Dorsolateral prefrontal cortex (tissue), 120 donors: ENCODE measurements at regions of chrX and their contacts with region 1.

Region 1: DNA sequence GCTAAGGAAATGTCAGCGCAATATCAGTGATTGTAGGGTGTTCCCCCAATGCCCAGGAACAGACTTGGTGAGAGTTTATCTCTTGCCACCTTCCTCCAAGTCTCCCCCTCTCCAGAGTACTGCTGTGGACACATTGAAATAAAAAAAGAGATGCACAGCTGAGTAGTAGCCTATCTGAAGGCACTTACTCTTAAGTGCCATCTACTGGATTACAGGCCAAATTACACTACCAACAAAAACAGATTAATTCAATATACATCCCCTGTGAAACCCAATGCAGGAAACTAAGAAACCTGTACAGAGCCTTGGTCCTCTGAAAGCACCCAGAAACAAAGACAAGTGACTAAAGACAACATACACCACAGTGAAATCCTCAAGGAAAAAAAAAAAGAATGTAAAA is 460.3 kb downstream of the ZIC3 start:
- DNase-seq: no peak
- H3K4me3 ChIP-seq: no peak overlapping the region
- H3K27ac ChIP-seq: no peak overlapping the region
- H3K27me3 ChIP-seq: peaks cover 0 to 90% (median 43%) of the 10 kb centered on the region in 45 donors
- CTCF ChIP-seq: peak in 47 of 56 donors; percentile 12 to 58 (median 40)

Region 2: DNA sequence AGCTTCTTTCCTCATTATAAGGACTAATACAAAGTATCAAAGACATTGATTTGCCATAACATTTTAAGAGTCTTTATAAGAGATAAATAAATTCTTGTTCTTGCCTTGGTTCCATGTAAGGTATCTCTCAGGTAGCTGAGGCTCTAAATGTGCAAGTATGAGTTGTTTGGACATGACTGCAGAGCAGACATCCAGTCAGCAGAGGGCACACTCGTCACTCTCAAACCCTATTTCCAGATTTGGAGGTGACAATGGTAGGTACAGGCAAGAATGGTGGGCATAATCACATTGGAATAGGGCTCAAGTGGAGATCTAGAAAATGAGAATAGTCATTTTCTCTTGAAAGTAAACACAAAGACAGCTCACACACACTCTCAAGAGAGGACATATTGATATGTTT is 593.6 kb before region 1 on chrX:
- intact Hi-C with region 1: loop called in 1 of 2 experiments (anchors 10 kb)
- DNase-seq: peak in 1 of 10 donors; percentile 17
- H3K4me3 ChIP-seq: no peak overlapping the region
- H3K27ac ChIP-seq: no peak overlapping the region
- H3K27me3 ChIP-seq: peaks cover 0 to 59% (median 35%) of the 10 kb centered on the region in 45 donors
- CTCF ChIP-seq: peak in 48 of 56 donors; percentile 18 to 60 (median 38)

Region 3: GRCh38 chrX:137896123-137896522 is 130.1 kb before region 1 on chrX:
- intact Hi-C with region 1: no loop called
- DNase-seq: no peak
- H3K4me3 ChIP-seq: no peak overlapping the region
- H3K27ac ChIP-seq: no peak overlapping the region
- H3K27me3 ChIP-seq: peaks cover 0 to 45% (median 4%) of the 10 kb centered on the region in 45 donors
- CTCF ChIP-seq: no peak

Region 4: DNA sequence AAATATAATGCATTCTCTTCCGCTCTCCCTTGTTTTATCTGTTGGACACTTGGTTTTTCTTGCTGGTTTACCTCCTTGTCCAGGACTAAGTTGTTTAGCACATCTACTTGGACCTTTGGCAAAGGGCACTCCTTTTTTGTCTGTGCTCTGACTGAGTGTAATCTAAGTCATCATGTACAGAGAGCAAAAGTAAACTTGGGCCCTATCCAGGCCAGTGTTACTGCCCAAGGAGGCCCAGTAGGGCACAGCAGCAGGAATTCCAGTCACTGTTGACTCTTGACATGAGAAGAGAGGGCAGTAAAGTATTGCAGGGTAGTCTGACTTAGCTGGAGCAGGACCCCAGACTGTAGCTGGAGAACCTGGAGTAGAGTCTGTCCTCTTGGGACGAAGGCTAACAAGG is 14.7 kb before region 1 on chrX:
- intact Hi-C with region 1: no loop called
- DNase-seq: no peak
- H3K4me3 ChIP-seq: no peak overlapping the region
- H3K27ac ChIP-seq: no peak overlapping the region
- H3K27me3 ChIP-seq: peaks cover 0 to 79% (median 19%) of the 10 kb centered on the region in 45 donors
- CTCF ChIP-seq: no peak

Region 5: DNA sequence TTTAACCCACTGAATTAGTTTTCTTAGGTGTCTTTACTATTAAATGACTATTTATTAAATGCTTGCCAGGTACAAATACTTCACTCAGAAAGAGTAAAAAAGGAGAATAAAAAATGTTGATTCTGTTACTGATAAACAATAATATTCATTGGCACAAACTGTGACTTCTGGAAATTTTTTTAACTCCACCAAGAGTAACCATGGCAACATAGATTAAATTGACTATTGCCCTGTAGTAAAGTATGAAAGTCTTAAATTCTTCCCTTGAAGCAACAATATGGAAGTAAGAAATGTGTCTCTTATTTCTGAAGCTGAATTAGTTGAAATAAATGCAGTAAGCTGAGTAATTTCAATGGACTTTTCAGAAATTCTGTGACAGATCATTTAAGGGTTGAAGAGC is 519.2 kb after region 1 on chrX:
- intact Hi-C with region 1: no loop called
- DNase-seq: no peak
- H3K4me3 ChIP-seq: no peak overlapping the region
- H3K27ac ChIP-seq: no peak overlapping the region
- H3K27me3 ChIP-seq: peaks cover 0 to 53% (median 3%) of the 10 kb centered on the region in 45 donors
- CTCF ChIP-seq: no peak